Activated naive CD4-positive, alpha-beta T cell treated with anti-CD3 and anti-CD28 coated beads, Interleukin-2, amount 10 ng/mL, durations not matched to agents 7 days and 5 days (primary cell): ENCODE measurements at regions of chr13 and their contacts with region 1.

Region 1: DNA sequence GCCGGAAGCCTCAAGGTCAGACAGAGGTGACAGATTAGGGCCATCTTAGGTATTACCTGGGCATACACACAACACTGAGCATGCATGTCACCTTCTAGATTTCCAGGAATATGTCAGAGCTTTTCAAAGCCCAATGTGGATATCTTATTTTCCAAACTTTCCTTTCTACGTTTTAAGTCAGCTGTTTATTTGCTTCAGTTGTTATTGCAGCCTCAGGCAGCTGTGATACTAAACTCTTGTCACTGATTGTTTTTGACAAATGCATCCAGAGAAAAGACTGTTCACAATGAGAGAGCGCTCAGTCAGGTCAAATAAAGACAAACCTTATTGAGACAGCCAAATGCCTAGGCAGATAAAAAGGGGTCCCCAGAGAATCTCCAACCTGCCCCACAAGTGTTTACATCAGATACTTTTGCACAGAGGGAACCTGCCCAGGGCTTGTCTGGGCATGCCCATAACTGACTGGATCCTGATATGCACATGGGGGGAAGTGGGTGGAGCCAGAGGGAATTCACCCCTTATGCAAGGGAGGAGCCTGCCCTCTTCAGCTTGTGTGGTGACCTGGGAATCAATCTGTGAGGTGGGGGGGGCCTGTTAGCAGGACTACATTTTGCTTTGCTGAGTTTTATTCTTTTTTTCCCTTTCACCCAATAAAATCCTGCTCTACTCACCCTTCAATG is 28.5 kb downstream of the MED4 start:
- DNase-seq: peak; percentile 67
- H3K4me3 Mint-ChIP-seq: no peak overlapping the region
- H3K27ac Mint-ChIP-seq: peak overlapping the region; percentile 83
- H3K4me1 Mint-ChIP-seq: peaks cover 25% of the 10 kb centered on the region
- H3K27me3 Mint-ChIP-seq: no peaks in the 10 kb centered on the region

Region 2: DNA sequence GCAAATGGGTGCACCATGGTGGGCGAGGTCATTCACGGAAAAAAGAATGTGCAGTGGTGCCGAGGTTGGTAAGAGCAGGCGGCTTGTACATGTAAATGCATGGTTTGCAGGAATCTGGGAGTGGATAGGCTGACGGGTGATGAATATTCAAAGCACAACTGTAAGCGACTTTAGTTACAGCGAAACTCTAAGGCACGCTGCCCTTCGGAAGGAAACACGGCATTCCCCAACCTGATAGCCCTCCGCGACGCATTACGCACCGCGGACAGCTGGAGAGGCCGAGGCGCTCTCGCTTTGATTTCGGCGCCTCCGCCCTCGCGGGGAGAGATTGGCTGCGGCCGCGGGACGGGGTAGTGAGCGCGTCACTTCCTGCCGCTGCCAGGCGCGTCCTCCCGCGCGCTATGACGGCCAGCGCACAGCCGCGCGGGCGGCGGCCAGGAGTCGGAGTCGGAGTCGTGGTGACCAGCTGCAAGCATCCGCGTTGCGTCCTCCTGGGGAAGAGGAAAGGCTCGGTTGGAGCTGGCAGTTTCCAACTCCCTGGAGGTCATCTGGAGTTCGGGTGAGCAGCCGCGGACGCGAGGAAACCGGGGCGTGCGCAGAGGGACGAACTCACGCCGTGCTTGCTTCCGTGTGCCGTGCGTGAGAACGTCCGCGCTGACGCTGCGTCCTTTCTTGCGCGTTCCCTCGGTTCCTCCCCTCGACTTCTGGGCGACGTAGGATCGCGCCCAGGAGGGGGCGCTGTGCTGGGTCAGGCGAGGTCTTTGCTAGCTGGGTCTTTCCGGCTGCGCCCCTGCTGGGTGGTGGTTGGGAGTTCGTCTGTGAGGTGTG is 28.9 kb before region 1 on chr13 and contains the start of gene NUDT15:
- CTCF ChIA-PET with region 1: interaction called, 13 read pairs
- DNase-seq: peak; percentile 97
- H3K4me3 Mint-ChIP-seq: peak within 1 kb of the TSS; percentile 96
- H3K27ac Mint-ChIP-seq: peak within 1 kb of the TSS; percentile 96
- H3K4me1 Mint-ChIP-seq: peaks cover 48% of the 10 kb centered on the region
- H3K27me3 Mint-ChIP-seq: peaks cover 5% of the 10 kb centered on the region

Region 3: GRCh38 chr13:48194379-48194754 is 127.9 kb after region 1 on chr13:
- CTCF ChIA-PET with region 1: no interaction called
- DNase-seq: no peak
- H3K4me3 Mint-ChIP-seq: no peak overlapping the region
- H3K27ac Mint-ChIP-seq: no peak overlapping the region
- H3K4me1 Mint-ChIP-seq: peaks cover 29% of the 10 kb centered on the region
- H3K27me3 Mint-ChIP-seq: no peaks in the 10 kb centered on the region